Left ventricle myocardium superior (tissue), 1 donor: ENCODE measurements at regions of chr10 and their contacts with region 1.

Region 1: GRCh38 chr10:70815504-70816219 is at the start of gene SGPL1:
- DNase-seq: peak; percentile 94
- ATAC-seq: peak; percentile 97
- total RNA-seq, gene SGPL1: 15.3 TPM

Region 2: GRCh38 chr10:70880077-70880534 is 64.4 kb after region 1 on chr10:
- intact Hi-C with region 1: loop called (anchors 5 kb)
- DNase-seq: peak; percentile 70
- ATAC-seq: peak; percentile 75

Region 3: GRCh38 chr10:70956029-70956759 is 140.5 kb after region 1 on chr10:
- intact Hi-C with region 1: no loop called
- DNase-seq: no peak
- ATAC-seq: peak; percentile 40